Esophagus muscularis mucosa (tissue), 4 donors: ENCODE measurements at regions of chr1 and their contacts with region 1.

Region 1: GRCh38 chr1:223683586-223684487 is 18.3 kb upstream of the CAPN8 start:
- DNase-seq: no peak
- H3K4me3 ChIP-seq: no peak overlapping the region
- H3K27ac ChIP-seq: no peak overlapping the region
- H3K4me1 ChIP-seq: no peaks in the 10 kb centered on the region
- H3K27me3 ChIP-seq: peaks cover 0 to 2% (median 0%) of the 10 kb centered on the region in 4 donors
- CTCF ChIP-seq: peak; percentile 49 to 59 (median 55)
- EP300 ChIP-seq: no peak
- POLR2A ChIP-seq: no peak

Region 2: DNA sequence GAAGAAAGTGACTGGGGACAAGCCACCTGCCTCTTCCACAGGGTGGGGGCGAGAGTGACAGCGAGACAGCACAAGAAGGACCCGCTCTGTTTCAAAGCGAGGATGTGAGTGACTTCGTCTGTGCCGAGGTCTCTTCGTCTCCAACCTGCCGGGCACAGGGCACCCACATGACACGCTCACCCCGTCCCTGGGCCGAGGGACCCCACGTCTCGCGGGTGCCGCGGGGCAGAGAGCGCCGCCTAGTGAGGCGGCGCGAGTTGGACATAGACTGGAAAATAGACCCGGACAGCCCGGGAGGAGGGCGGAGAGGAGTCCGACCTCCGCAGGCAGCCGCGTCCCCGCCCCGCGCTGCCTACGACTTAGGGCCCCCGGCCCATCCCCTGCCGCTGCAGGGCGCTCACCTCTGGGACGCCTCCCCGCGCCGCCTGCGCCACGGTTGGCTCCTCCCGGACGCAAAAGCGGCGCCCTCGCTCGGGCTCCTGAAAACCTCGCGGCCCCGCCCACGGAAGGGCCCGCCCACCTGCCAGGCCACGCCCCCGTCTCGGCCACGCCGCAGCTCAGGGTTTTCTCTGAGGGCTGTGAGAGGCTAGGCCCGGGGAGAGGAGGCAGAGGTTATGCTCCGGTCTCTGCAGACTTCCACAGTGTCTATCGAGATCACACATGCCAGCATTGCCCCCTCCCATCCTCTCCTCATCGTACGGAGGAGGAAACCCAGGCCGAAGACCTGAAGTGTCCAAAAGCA is 540.9 kb before region 1 on chr1 and contains the start of gene TLR5:
- intact Hi-C with region 1: loop called (anchors 5 kb)
- DNase-seq: peak; percentile 96
- H3K4me3 ChIP-seq: peak within 1 kb of the TSS; percentile 61 to 71 (median 65)
- H3K27ac ChIP-seq: peak within 1 kb of the TSS; percentile 72 to 78 (median 74)
- H3K4me1 ChIP-seq: peaks cover 15 to 41% (median 29%) of the 10 kb centered on the region in 4 donors
- H3K27me3 ChIP-seq: no peaks in the 10 kb centered on the region
- CTCF ChIP-seq: peak; percentile 55 to 86 (median 70)
- EP300 ChIP-seq: no peak
- POLR2A ChIP-seq: no peak
- total RNA-seq, gene TLR5: 2.8 to 8.3 (median 6.1) TPM